K562 (cell line): ENCODE measurements at regions of chr6 and their contacts with region 1.

Region 1: DNA sequence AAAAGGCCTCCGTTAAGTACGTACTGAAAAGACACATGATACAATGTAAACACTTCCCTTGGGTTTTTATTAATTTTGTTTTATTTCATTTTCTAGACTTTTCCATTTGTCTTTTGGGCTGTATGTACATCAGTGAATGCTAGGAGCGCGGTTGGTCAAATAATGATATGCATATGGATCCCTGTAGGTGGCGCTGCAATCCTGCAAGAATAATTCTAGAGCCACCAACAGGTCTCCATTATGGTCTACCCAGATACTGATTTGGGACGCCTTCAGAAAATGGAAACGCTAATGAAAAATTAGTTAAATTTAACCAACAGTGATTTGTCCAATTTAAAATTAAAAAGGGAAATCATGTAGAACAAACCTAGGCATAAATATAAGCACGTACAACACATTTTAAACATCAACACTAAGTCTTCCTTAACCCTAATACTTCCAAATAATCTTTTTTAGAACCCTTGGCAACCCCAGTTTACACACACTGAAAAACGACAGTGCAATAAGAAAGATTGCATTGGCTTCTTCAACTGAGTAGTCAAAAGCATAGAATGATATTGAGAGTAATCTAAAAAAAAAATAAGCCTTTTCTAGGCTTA is 433.5 kb downstream of the RFPL4B start:
- DNase-seq: peak; percentile 61 to 79 (median 66)
- ATAC-seq: peak; percentile 89
- H3K4me3 ChIP-seq: no peak overlapping the region
- H3K27ac ChIP-seq: no peak overlapping the region
- H3K4me1 ChIP-seq: no peaks in the 10 kb centered on the region
- H3K27me3 ChIP-seq: no peaks in the 10 kb centered on the region
- CTCF ChIP-seq: peak; percentile 63 to 78 (median 73)
- EP300 ChIP-seq: no peak
- POLR2A ChIP-seq: no peak
- RAD21 ChIP-seq: peak; percentile 79 to 80

Region 2: GRCh38 chr6:113039005-113039404 is 258.4 kb after region 1 on chr6:
- CTCF ChIA-PET with region 1: no interaction called
- POLR2A ChIA-PET with region 1: no interaction called
- in situ Hi-C with region 1: no loop called
- intact Hi-C with region 1: loop called (anchors 2 kb)
- DNase-seq: peak in 1 of 4 experiments; percentile 20
- ATAC-seq: peak; percentile 61; the same call in 2 of the 3 replicates
- H3K4me3 ChIP-seq: no peak overlapping the region
- H3K27ac ChIP-seq: no peak overlapping the region
- H3K4me1 ChIP-seq: no peaks in the 10 kb centered on the region
- H3K27me3 ChIP-seq: no peaks in the 10 kb centered on the region
- CTCF ChIP-seq: peak in 1 of 3 experiments; percentile 53; a peak in 2 of 6 replicates
- EP300 ChIP-seq: no peak
- POLR2A ChIP-seq: no peak
- RAD21 ChIP-seq: peak; percentile 66 to 83

Region 3: GRCh38 chr6:113858480-113859348 is 1078.1 kb after region 1 on chr6:
- CTCF ChIA-PET with region 1: no interaction called
- POLR2A ChIA-PET with region 1: no interaction called
- in situ Hi-C with region 1: no loop called
- intact Hi-C with region 1: loop called (anchors 1 kb)
- DNase-seq: peak; percentile 73 to 92 (median 90)
- ATAC-seq: peak; percentile 90
- H3K4me3 ChIP-seq: peak overlapping the region; percentile 42
- H3K27ac ChIP-seq: no peak overlapping the region
- H3K4me1 ChIP-seq: peaks cover 6 to 25% of the 10 kb centered on the region in 2 experiments
- H3K27me3 ChIP-seq: peaks cover 0 to 15% of the 10 kb centered on the region in 2 experiments; a peak in 2 of 5 replicates
- CTCF ChIP-seq: peak; percentile 70 to 89 (median 79)
- EP300 ChIP-seq: no peak
- POLR2A ChIP-seq: no peak
- RAD21 ChIP-seq: peak; percentile 89 to 90

Region 4: DNA sequence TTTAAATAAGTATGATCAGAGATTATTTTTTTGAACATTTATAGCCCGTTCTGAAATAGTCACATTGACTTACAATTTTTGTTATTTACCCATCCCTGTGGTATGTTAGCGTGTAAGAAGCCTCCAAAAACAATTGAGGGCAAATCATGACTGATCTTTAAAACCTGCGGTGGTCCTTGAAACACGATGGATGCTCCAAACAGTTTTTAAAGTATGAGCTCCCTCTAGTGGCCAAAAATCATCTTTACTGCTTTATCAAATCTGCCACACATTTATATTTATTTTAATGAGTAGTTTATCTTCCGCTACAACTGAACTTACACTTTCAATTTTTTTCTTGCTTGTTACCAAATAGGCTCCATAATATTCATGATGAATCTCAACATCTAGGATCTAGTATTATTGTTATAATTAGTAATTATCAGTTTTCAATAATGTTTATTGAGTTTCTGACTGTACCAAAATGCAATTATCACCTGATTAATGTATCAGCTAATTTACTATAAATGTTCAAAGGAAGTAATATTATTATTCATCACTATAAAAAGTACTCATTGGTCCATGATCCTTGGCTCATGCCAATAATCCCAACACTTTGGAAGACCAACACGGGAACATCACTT is 1128.7 kb after region 1 on chr6:
- CTCF ChIA-PET with region 1: no interaction called
- POLR2A ChIA-PET with region 1: no interaction called
- in situ Hi-C with region 1: no loop called
- intact Hi-C with region 1: loop called (anchors 1 kb)
- DNase-seq: peak; percentile 48 to 69 (median 50)
- ATAC-seq: peak; percentile 75
- H3K4me3 ChIP-seq: no peak overlapping the region
- H3K27ac ChIP-seq: no peak overlapping the region
- H3K4me1 ChIP-seq: no peaks in the 10 kb centered on the region
- H3K27me3 ChIP-seq: no peaks in the 10 kb centered on the region
- CTCF ChIP-seq: peak; percentile 45 to 76 (median 48); a peak in 5 of 6 replicates
- EP300 ChIP-seq: no peak
- POLR2A ChIP-seq: no peak
- RAD21 ChIP-seq: peak; percentile 76 to 80

Region 5: DNA sequence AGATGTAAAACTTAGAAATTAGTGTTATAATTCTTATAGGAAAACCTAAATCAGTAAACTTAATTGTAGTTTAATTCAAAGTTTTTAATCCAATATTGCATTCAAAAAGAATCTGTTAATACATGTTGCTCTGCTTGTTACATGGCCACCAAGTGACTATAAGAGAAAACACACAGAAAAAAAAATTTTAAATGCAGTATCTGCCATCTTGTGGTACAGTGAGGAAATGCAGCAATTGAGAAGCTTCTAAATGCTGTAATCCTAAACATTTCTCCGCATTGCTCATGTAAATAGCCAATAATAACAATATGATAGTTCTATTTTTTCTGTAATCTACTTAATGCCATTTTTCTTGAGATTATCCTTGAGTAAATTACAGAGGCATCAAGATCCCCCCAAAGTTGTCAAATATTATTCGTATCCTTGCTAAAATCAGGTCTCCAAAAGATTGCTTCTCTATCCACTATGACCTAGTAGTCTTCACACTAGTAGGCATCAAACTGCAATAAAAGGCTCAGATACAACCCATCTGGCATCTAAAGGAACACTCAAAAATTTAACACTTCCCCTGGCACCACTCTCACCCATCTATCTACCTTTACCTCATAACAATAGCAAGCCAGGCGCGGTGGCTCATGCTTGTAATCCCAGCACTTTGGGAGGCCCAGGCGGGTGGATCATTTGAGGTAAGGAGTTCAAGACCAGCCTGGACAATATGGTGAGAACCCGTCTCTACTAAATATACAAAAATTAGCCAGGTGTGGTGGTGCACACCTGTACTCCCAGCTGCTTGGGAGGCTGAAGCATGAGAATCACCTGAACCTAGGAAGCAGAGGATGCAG is 1155.7 kb after region 1 on chr6:
- CTCF ChIA-PET with region 1: interaction called, 5 read pairs
- POLR2A ChIA-PET with region 1: no interaction called
- in situ Hi-C with region 1: no loop called
- intact Hi-C with region 1: loop called (anchors 1 kb)
- DNase-seq: peak; percentile 41 to 69 (median 45)
- ATAC-seq: peak; percentile 93
- H3K4me3 ChIP-seq: no peak overlapping the region
- H3K27ac ChIP-seq: no peak overlapping the region
- H3K4me1 ChIP-seq: no peaks in the 10 kb centered on the region
- H3K27me3 ChIP-seq: no peaks in the 10 kb centered on the region
- CTCF ChIP-seq: peak; percentile 57 to 90 (median 88)
- EP300 ChIP-seq: no peak
- POLR2A ChIP-seq: no peak
- RAD21 ChIP-seq: peak; percentile 67 to 82